ENCODE measurements at regions of chr9 and their contacts with region 1.

Region 1: GRCh38 chr9:111992523-111992922 is 95.9 kb downstream of the UGCG start:
- DNase-seq: peak; percentile 77
- ATAC-seq: peak; percentile 86
- H3K4me3 ChIP-seq: no peak overlapping the region
- H3K27ac ChIP-seq: peak overlapping the region; percentile 89
- H3K4me1 ChIP-seq: peaks cover 54% of the 10 kb centered on the region
- H3K27me3 ChIP-seq: no peaks in the 10 kb centered on the region
- CTCF ChIP-seq: no peak
- EP300 ChIP-seq: peak; percentile 43 to 69; a peak in 3 of 4 replicates
- POLR2A ChIP-seq: no peak
- RAD21 ChIP-seq: no peak

Region 2: GRCh38 chr9:111078391-111079038 is 914.0 kb before region 1 on chr9:
- CTCF ChIA-PET with region 1: no interaction called
- POLR2A ChIA-PET with region 1: no interaction called
- RAD21 ChIA-PET with region 1: no interaction called
- SMC1A ChIA-PET with region 1: no interaction called
- in situ Hi-C with region 1: no loop called
- intact Hi-C with region 1: no loop called
- DNase-seq: peak; percentile 60
- ATAC-seq: peak; percentile 83
- H3K4me3 ChIP-seq: no peak overlapping the region
- H3K27ac ChIP-seq: peak overlapping the region; percentile 50
- H3K4me1 ChIP-seq: no peaks in the 10 kb centered on the region
- H3K27me3 ChIP-seq: no peaks in the 10 kb centered on the region
- CTCF ChIP-seq: no peak
- EP300 ChIP-seq: peak; percentile 25 to 43; a peak in 2 of 4 replicates
- POLR2A ChIP-seq: no peak
- RAD21 ChIP-seq: no peak

Region 3: DNA sequence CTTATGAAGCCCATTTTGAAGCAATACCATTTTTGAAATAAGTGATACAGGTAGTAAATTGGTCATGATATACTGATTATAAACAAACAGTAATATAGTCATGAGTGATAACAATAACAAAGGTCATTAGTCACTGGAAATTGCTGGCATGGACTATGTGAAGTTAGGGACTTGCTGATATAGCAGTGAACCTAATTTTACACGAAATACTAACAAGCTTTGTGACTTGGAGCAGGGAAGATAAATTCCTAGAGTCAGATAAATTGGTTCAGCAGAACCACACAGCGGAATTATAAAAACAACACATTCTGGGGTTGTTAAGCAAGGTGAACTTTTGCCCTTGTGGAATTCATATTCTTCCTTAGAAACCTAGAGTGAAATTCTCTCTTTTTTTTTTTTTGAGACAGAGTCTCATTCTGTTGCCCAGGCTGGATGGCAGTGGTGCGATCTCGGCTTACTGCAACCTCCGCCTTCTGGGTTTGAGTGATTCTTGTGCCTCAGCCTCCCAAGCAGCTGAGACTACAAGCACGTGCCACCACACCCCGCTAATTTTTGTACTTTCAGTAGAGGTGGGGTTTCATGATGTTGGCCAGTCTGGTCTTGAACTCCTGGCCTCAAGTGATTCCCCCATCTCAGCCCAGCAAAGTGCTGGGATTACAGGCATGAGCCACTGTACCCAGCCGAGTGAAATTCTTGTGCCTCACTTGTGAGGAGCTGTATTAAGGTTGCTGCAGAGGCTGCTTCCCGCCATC is 90.0 kb before region 1 on chr9:
- CTCF ChIA-PET with region 1: interaction called, 13 read pairs
- POLR2A ChIA-PET with region 1: interaction called, 3 read pairs
- RAD21 ChIA-PET with region 1: interaction called, 23 read pairs
- SMC1A ChIA-PET with region 1: interaction called, 8 read pairs
- in situ Hi-C with region 1: no loop called
- intact Hi-C with region 1: no loop called
- DNase-seq: no peak
- ATAC-seq: no peak
- H3K4me3 ChIP-seq: peak overlapping the region; percentile 80; the same call in 1 of the 2 replicates
- H3K27ac ChIP-seq: peak overlapping the region; percentile 37; the same call in 1 of the 2 replicates
- H3K4me1 ChIP-seq: peaks cover 26% of the 10 kb centered on the region
- H3K27me3 ChIP-seq: no peaks in the 10 kb centered on the region
- CTCF ChIP-seq: no peak
- EP300 ChIP-seq: no peak
- POLR2A ChIP-seq: no peak
- RAD21 ChIP-seq: no peak

Region 4: DNA sequence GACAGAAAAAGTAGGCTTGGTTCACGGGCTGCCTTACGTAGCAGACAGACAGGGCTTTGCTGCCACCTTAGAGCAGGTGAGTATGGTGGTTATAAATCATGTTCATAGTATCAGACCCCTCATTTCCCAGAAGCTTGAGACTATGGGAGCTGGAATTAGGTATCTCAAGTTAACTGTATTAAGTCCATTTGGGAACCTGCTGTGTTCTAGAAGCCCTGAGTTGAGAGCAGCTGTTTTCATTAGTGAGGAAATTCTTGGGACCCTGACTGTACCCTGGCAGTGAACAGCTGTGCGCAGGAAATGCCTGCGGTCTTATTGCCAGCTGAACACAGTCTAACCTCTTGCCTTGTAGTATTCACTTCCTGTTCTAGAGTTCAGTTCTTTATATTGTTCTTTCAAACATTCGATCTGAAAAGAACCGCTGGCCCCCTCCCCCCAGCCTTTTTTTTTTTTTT is 66.1 kb before region 1 on chr9:
- CTCF ChIA-PET with region 1: no interaction called
- POLR2A ChIA-PET with region 1: interaction called, 4 read pairs
- RAD21 ChIA-PET with region 1: interaction called, 6 read pairs
- SMC1A ChIA-PET with region 1: interaction called, 18 read pairs
- in situ Hi-C with region 1: no loop called
- intact Hi-C with region 1: no loop called
- DNase-seq: peak; percentile 86
- ATAC-seq: peak; percentile 98
- H3K4me3 ChIP-seq: no peak overlapping the region
- H3K27ac ChIP-seq: peak overlapping the region; percentile 75
- H3K4me1 ChIP-seq: peaks cover 13% of the 10 kb centered on the region; the same call in 1 of the 2 replicates
- H3K27me3 ChIP-seq: no peaks in the 10 kb centered on the region
- CTCF ChIP-seq: no peak
- EP300 ChIP-seq: peak; percentile 73 to 76; a peak in 3 of 4 replicates
- POLR2A ChIP-seq: no peak
- RAD21 ChIP-seq: no peak

Region 5: GRCh38 chr9:111965566-111966019 is 26.9 kb before region 1 on chr9:
- CTCF ChIA-PET with region 1: interaction called, 9 read pairs
- POLR2A ChIA-PET with region 1: interaction called, 4 read pairs
- RAD21 ChIA-PET with region 1: interaction called, 107 read pairs
- SMC1A ChIA-PET with region 1: interaction called, 136 read pairs
- in situ Hi-C with region 1: no loop called
- intact Hi-C with region 1: no loop called
- DNase-seq: peak; percentile 90
- ATAC-seq: peak; percentile 80
- H3K4me3 ChIP-seq: no peak overlapping the region
- H3K27ac ChIP-seq: peak overlapping the region; percentile 56
- H3K4me1 ChIP-seq: peaks cover 25% of the 10 kb centered on the region
- H3K27me3 ChIP-seq: no peaks in the 10 kb centered on the region
- CTCF ChIP-seq: no peak
- EP300 ChIP-seq: peak; percentile 82 to 89
- POLR2A ChIP-seq: no peak
- RAD21 ChIP-seq: 0 out of 2 replicates have a peak, but pooled peaks have one; percentile 3

Region 6: GRCh38 chr9:112020680-112021596 is 28.4 kb after region 1 on chr9:
- CTCF ChIA-PET with region 1: interaction called, 14 read pairs
- POLR2A ChIA-PET with region 1: interaction called, 77 read pairs
- RAD21 ChIA-PET with region 1: interaction called, 174 read pairs
- SMC1A ChIA-PET with region 1: interaction called, 313 read pairs
- in situ Hi-C with region 1: no loop called
- intact Hi-C with region 1: no loop called
- DNase-seq: peak; percentile 80
- ATAC-seq: peak; percentile 68
- H3K4me3 ChIP-seq: peak overlapping the region; percentile 10; the same call in 1 of the 2 replicates
- H3K27ac ChIP-seq: peak overlapping the region; percentile 63
- H3K4me1 ChIP-seq: peaks cover 33% of the 10 kb centered on the region
- H3K27me3 ChIP-seq: no peaks in the 10 kb centered on the region
- CTCF ChIP-seq: no peak
- EP300 ChIP-seq: peak; percentile 69 to 75; a peak in 3 of 4 replicates
- POLR2A ChIP-seq: no peak
- RAD21 ChIP-seq: no peak

Region 7: GRCh38 chr9:112050544-112051475 is 58.3 kb after region 1 on chr9:
- CTCF ChIA-PET with region 1: interaction called, 3 read pairs
- POLR2A ChIA-PET with region 1: interaction called, 10 read pairs
- RAD21 ChIA-PET with region 1: interaction called, 6 read pairs
- SMC1A ChIA-PET with region 1: interaction called, 9 read pairs
- in situ Hi-C with region 1: no loop called
- intact Hi-C with region 1: no loop called
- DNase-seq: no peak
- ATAC-seq: no peak
- H3K4me3 ChIP-seq: no peak overlapping the region
- H3K27ac ChIP-seq: no peak overlapping the region
- H3K4me1 ChIP-seq: peaks cover 31% of the 10 kb centered on the region
- H3K27me3 ChIP-seq: no peaks in the 10 kb centered on the region
- CTCF ChIP-seq: no peak
- EP300 ChIP-seq: no peak
- POLR2A ChIP-seq: no peak
- RAD21 ChIP-seq: no peak

Region 8: DNA sequence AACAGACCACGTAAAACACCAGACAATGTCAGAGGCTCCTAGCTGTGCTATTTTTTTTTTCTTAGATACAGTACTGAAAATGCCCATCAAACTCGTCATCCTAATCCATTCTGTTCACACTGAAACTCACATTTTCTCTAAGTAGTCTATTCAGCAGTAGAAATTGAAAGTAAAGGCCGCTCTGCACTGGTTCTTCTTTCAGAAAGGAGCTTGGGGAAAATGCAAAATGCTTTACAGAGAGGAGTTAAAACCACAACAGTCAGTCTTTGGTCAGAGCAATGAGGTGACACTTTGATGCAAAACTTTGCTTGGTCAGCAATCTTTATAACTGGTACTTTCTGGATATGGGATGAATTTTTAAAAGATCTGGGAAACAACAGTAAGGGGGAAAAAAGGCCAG is 226.4 kb after region 1 on chr9:
- CTCF ChIA-PET with region 1: no interaction called
- POLR2A ChIA-PET with region 1: no interaction called
- RAD21 ChIA-PET with region 1: no interaction called
- SMC1A ChIA-PET with region 1: no interaction called
- in situ Hi-C with region 1: no loop called
- intact Hi-C with region 1: no loop called
- DNase-seq: peak; percentile 85
- ATAC-seq: peak; percentile 98
- H3K4me3 ChIP-seq: no peak overlapping the region
- H3K27ac ChIP-seq: peak overlapping the region; percentile 65
- H3K4me1 ChIP-seq: peaks cover 26% of the 10 kb centered on the region
- H3K27me3 ChIP-seq: no peaks in the 10 kb centered on the region
- CTCF ChIP-seq: no peak
- EP300 ChIP-seq: peak in 1 of 2 experiments; percentile 50; a peak in 1 of 4 replicates
- POLR2A ChIP-seq: no peak
- RAD21 ChIP-seq: 0 out of 2 replicates have a peak, but pooled peaks have one; percentile 29